ENCODE measurements at regions of chr1 and their contacts with region 1.

Region 1: GRCh38 chr1:214328770-214329469 is 48.0 kb downstream of the SMYD2 start:
- DNase-seq: peak; percentile 81
- H3K27ac ChIP-seq: no peak overlapping the region
- CTCF ChIP-seq: peak; percentile 93

Region 2: DNA sequence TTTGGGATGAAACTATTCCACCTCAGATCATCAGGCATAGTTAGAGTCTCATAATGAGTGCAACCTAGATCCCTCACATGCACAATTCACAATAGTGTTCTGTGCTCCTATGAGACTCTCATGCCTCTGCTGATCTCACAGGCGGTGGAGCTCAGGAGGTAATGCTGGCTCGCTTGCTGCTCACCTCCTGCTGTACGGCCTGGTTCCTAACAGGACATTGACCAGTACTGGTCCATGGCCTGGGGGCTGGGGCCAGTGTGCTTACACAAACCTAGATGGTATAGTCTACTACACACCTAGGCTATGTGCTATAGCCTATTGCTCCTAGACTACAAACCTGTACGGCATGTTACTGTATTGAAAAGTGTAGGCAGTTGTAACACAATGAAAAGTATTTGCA is 829.5 kb before region 1 on chr1:
- CTCF ChIA-PET with region 1: no interaction called
- POLR2A ChIA-PET with region 1: no interaction called
- DNase-seq: no peak
- H3K27ac ChIP-seq: no peak overlapping the region
- CTCF ChIP-seq: no peak

Region 3: GRCh38 chr1:214213136-214213535 is 115.8 kb before region 1 on chr1:
- CTCF ChIA-PET with region 1: interaction called, 54 read pairs
- POLR2A ChIA-PET with region 1: no interaction called
- DNase-seq: peak; percentile 94
- H3K27ac ChIP-seq: peak overlapping the region; percentile 34; the same call in 1 of the 2 replicates
- CTCF ChIP-seq: no peak; the same call in 1 of the 2 replicates

Region 4: DNA sequence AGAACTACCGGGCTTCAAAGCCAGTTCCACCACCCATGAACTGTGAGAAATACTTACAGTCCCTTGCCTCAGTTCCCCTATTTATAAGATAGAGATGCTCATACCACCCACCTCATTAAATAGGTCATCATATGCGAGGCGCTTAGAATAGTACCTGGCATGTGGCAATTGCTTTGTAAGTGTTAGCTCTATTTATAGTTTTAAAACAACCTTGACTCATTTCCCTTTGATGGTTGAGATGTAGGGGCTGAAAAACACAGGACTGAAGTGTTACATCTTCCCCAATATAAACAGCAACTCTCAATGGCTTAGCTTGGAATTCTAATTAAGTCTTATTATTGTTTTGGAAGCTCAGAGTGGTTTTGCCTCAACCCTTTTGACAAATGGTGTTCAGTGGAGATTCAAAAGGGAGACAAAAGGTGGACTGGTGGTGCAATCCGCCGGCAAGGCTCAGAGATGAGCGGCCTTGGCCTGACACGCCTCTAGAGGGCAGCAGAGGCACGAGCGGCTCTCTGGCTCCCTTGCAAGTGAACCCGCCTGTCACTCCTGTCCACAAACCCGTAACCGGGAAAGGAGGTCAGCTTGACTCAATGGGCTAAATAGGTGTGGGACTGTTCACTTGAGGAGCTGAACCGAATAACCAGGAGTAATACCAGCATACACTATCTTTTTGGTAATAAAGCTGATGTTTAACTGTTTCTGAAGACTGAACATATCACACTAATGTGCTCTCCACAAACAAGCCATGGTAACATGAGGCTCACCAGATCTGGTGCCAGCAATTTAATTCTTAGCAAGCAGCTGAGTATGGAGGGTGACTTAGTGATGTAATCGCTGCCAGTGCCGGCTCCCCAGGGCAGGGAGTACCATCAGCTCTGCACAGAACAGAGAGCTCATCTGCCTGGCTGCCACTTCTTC is 67.5 kb before region 1 on chr1:
- CTCF ChIA-PET with region 1: interaction called, 70 read pairs
- POLR2A ChIA-PET with region 1: no interaction called
- DNase-seq: peak; percentile 68
- H3K27ac ChIP-seq: no peak overlapping the region
- CTCF ChIP-seq: peak; percentile 97

Region 5: DNA sequence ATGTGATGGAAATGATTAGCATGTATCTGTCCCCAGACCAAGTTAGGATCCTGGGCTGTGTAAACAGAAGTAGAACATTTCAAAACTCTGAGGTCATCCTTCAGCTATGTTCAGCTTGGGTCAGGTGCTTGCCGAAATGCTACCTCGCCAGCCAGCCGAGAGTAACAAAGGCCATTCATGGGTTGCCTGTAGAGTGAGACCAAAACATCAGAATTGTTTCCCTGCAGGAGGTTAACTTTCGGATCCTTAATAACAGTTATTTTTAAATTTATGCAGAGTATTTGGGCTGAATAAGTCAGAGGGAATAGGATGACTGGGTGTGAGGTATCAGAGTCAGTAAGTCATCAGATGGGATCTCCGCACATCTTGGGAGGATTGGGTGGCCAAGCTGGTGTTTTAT is 12.3 kb before region 1 on chr1:
- CTCF ChIA-PET with region 1: interaction called, 13 read pairs
- POLR2A ChIA-PET with region 1: no interaction called
- DNase-seq: no peak
- H3K27ac ChIP-seq: no peak overlapping the region
- CTCF ChIP-seq: no peak

Region 6: DNA sequence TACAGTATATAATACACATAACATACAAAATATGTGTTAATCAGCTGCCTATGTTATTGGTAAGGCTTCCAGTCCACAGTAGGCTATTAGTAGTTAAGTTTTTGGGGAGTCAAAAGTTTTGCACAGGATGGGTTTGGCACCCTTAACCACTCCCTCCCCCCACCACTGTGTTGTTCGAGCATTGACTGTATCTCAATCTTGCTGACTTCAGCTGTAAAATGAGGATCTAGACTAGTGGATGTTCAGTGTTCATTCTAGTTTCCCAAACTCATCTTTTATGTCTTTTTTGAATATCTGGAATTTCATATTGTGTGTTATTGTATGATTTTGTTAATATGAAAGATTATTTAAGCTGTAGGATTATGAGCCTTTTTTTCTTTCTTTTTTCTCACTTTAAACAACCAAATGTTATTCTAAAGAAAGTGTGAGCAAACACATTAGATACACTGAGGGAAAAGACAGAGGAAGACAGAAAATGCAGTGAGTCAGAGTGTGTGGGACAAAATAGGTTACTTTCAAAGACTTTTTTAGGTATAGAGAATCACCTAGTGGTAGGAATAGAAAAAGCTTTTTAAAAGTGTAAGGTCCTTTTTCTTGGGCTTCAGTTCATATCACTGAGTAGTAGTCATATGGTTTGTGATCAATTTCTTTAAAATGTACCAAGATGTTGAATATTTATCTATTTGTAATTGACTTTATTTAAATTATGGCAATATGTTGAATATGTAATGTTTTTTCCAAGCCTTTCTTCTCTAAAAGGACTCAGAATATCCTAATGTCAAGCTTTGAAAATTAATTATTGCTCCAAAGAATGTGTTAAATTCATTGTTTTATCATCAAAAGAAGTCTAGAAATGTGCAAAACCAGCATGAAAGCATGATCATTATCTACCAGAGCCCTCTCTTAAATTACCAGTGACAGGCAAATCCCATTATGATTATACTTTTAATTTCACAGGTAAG is 256.2 kb after region 1 on chr1:
- CTCF ChIA-PET with region 1: interaction called, 31 read pairs
- POLR2A ChIA-PET with region 1: no interaction called
- DNase-seq: peak; percentile 54
- H3K27ac ChIP-seq: peak overlapping the region; percentile 71
- CTCF ChIP-seq: peak; percentile 96

Measured in RWPE1 (cell line).